ENCODE measurements at regions of chr2 and their contacts with region 1.

Region 1: GRCh38 chr2:96868555-96869280 is 1.2 kb downstream of the SEMA4C start:
- DNase-seq: peak; percentile 84
- ATAC-seq: peak; percentile 78
- H3K4me3 ChIP-seq: peak overlapping the region; percentile 97
- H3K27ac ChIP-seq: peak overlapping the region; percentile 38
- H3K4me1 ChIP-seq: peaks cover 30% of the 10 kb centered on the region
- H3K27me3 ChIP-seq: no peaks in the 10 kb centered on the region
- CTCF ChIP-seq: peak; percentile 74

Region 2: DNA sequence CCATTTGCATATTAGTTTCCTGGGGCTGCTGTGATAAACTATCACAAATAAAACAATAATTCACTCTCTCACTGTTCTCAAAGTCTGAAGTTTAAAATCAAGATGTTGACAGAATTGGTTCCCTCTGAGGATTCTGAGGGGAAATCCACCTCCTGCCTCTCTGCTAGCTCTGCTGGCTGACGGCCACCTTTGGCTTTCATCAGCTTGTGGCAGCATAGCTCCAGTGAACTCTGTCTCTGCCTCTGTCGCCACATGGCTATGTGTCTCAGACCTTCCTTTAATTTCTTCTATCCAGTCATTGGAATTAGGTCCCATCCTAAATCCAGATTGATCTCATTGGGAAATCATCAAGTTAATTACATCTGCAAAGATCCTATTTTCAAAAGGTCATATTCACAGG is 1315.8 kb before region 1 on chr2:
- CTCF ChIA-PET with region 1: no interaction called
- POLR2A ChIA-PET with region 1: no interaction called
- intact Hi-C with region 1: no loop called
- DNase-seq: no peak
- ATAC-seq: no peak
- H3K4me3 ChIP-seq: no peak overlapping the region
- H3K27ac ChIP-seq: no peak overlapping the region
- H3K4me1 ChIP-seq: no peaks in the 10 kb centered on the region
- H3K27me3 ChIP-seq: no peaks in the 10 kb centered on the region
- CTCF ChIP-seq: no peak

Region 3: GRCh38 chr2:96951093-96951654 is 82.5 kb after region 1 on chr2:
- CTCF ChIA-PET with region 1: no interaction called
- POLR2A ChIA-PET with region 1: no interaction called
- intact Hi-C with region 1: loop called (anchors 5 kb)
- DNase-seq: peak; percentile 85
- ATAC-seq: peak; percentile 98
- H3K4me3 ChIP-seq: peak overlapping the region; percentile 3; the same call in 1 of the 2 replicates
- H3K27ac ChIP-seq: no peak overlapping the region
- H3K4me1 ChIP-seq: peaks cover 4% of the 10 kb centered on the region; the same call in 1 of the 2 replicates
- H3K27me3 ChIP-seq: no peaks in the 10 kb centered on the region
- CTCF ChIP-seq: peak; percentile 96